BJ (cell line): ENCODE measurements at regions of chr9 and their contacts with region 1.

Region 1: GRCh38 chr9:36023260-36024048 is 13.3 kb upstream of the RECK start:
- DNase-seq: no peak
- H3K4me3 ChIP-seq: no peak overlapping the region
- H3K27me3 ChIP-seq: no peaks in the 10 kb centered on the region
- CTCF ChIP-seq: peak; percentile 84

Region 2: DNA sequence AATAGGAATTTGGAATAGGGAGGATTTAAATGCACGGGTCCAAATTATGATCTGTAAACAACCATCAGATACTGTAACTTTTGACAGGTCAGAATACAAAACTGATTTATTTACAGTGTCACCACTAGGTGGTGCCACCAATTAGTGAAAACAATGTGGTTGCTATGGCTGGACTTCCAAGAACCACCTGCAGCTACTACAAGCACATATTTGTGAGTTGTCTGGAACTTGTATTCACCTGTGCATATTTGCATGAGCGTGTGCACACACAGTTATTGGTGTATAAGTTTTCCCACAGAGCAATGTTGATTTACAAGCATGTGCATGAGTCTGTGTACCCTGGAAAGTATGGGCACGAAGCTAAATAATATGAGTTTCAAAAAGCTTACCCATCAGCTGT is 120.4 kb before region 1 on chr9:
- CTCF ChIA-PET with region 1: interaction called, 17 read pairs
- POLR2A ChIA-PET with region 1: interaction called, 3 read pairs
- DNase-seq: no peak
- H3K4me3 ChIP-seq: no peak overlapping the region
- H3K27me3 ChIP-seq: peaks cover 2% of the 10 kb centered on the region; the same call in 1 of the 2 replicates
- CTCF ChIP-seq: peak; percentile 52

Region 3: DNA sequence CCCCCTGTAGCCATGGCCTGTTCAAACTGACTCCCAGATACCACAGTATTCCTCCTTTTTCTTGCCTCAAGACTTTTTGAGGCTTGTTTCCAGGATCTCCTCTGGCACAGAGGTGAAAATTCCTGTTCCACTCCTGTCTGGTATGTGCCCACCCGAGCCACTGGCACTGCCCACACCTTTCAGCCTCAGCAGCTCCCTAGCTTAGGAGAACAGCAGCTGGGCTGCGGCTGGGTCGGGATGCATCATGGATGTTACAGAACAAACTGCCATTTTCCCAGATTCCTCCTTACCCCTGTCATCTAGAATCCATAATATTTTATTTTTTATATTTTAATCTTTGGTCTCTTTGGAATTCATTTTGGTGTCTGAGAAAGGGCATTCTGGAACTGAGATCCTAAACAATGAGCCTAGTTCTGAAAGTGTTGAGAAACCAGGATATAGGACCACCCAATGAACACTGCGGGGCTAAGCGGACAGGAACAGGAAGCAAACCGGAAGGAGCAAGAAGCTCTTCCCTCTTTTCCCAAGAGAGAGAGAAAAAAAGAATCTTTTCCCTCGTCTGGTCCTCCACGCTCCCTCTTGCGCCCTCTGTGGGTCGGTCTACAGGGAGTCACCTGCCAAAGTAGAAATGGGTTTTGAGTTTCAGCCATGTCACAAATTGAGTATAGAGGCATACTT is 78.0 kb before region 1 on chr9:
- CTCF ChIA-PET with region 1: interaction called, 13 read pairs
- POLR2A ChIA-PET with region 1: no interaction called
- DNase-seq: peak; percentile 26
- H3K4me3 ChIP-seq: no peak overlapping the region
- H3K27me3 ChIP-seq: no peaks in the 10 kb centered on the region
- CTCF ChIP-seq: peak; percentile 92

Region 4: GRCh38 chr9:35954942-35955546 is 68.4 kb before region 1 on chr9:
- CTCF ChIA-PET with region 1: interaction called, 60 read pairs
- POLR2A ChIA-PET with region 1: no interaction called
- DNase-seq: no peak
- H3K4me3 ChIP-seq: no peak overlapping the region
- H3K27me3 ChIP-seq: no peaks in the 10 kb centered on the region
- CTCF ChIP-seq: peak; percentile 88

Region 5: DNA sequence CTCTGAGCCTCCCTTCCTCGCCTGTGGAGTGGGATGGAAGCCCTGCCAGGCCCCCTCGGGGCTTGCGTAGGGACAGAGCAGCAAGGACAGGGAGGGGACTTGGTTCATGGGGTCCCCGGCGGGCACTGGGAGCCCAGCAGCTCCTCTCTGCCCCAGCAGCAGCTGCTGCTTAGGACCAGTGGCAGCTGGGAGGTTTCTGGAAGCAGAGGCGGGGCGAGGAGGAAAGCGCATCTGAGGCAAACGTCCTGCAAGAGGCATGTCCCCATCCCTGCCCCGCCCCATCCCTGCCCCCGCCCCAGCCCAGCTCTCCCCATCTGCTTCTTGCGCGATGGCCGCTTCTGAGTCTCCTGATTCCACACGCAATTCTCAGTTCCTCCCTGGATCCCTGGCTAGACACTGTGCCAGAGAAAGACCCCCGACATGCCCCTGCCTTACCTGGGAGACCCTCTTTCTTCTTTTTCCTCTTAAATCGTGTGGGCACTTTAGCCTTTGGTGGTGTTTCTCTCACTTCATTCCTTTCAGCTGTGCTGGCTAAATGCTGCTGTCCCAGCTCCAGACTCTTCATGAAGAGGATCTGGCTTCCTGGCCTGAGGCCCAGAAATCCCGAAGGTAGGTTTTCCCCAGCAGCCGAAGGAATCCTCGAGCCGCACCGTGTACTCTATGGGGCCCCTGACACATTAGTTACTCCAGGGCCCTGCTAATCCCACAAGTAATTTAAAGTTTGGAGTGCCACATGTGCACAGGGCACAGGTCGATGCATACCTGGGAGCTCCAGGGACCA is 61.1 kb before region 1 on chr9:
- CTCF ChIA-PET with region 1: interaction called, 60 read pairs
- POLR2A ChIA-PET with region 1: no interaction called
- DNase-seq: peak; percentile 28
- H3K4me3 ChIP-seq: peak overlapping the region; percentile 30
- H3K27me3 ChIP-seq: no peaks in the 10 kb centered on the region
- CTCF ChIP-seq: no peak

Region 6: GRCh38 chr9:36036780-36037548 is 13.5 kb after region 1 on chr9 and contains the start of gene RECK:
- CTCF ChIA-PET with region 1: interaction called, 13 read pairs
- POLR2A ChIA-PET with region 1: no interaction called
- DNase-seq: no peak
- H3K4me3 ChIP-seq: peak within 1 kb of the TSS; percentile 79
- H3K27me3 ChIP-seq: no peaks in the 10 kb centered on the region
- CTCF ChIP-seq: no peak
- polyA plus RNA-seq, gene RECK: 59.8 and 72.8 TPM in 2 replicates

Region 7: DNA sequence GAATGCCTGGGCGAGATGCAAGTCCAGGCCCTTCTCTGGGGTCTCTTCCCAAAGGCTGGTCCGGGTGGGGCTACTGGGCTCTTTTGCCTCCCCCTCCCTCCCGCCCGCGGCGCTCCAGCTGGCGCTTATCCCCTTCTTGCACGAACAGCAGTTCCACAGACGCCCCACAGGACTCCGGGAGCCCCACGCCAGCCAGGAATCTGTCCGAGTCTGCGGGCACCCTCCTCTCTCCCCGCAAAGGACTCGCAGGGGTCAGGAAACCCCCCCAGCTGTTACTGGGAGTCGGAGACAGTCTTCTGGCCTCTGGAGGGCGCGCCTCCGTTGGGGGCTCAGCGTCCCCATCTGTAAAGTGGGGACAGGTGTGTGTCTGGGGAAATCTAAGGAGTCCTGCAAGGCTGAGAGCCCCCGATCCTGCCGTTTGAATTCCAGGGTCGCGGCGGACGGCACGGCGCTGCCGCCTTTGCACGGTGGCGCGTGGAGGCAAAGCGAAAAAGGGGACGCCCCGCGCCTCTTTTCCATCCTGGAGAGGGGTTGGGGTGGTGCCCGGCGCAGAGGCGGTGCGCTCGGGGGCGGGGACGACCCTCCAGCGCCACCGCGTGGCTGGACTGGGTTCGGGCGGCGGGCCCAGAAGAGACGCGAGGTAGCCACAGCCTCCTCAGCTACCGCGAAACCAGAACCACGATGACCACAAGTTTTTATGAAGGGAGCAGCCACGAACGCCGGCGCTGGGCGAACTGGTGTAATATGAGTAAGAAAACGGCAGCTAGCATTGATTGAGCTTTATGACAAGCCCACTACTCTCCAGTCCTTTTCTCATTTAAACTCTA is 142.9 kb after region 1 on chr9:
- CTCF ChIA-PET with region 1: interaction called, 10 read pairs
- POLR2A ChIA-PET with region 1: no interaction called
- DNase-seq: no peak
- H3K4me3 ChIP-seq: peak overlapping the region; percentile 57
- H3K27me3 ChIP-seq: no peaks in the 10 kb centered on the region
- CTCF ChIP-seq: peak; percentile 80